ENCODE measurements at regions of chr3 and their contacts with region 1.

Region 1: DNA sequence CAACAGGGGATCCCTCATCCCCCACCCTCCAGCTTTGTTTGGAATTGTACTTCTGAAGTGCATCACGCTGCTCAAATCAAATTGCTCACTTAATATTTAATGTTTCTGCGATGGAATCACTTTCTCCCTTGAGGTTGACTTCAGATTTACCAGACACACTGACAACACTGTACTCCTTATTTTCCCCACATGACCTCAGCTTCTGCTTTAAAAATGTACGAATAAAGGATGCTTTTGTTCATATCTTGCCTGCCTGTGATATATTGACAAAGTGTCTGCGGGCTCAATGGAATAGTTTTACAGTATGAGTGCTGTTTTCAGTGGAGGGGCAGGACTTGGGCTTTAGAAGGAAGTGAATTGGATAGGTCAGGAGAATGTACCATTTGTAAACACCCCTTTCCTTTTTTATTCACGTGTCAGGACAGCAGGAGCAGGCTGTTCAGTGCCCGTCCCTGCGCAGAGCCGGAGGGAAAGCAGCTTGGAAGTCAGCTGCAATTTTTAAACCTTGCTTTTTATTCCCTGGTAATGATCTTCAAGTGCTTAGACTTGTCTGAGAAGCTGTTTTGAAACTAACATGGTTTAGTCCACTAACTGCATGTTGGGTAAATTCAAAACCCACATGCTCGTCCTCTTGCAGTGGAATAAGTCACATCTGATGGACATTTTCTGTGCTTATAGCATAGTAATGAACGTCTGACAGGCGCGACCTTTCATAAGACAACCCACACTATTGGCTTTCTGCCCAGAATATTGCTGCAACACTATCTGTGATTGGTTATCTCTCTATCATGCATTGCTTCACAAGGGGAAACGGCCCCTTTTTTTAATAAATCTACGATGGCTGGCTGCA is 29.9 kb downstream of the MBNL1 start:
- DNase-seq: peak in 31 of 35 experiments; percentile 10 to 89 (median 54)
- ATAC-seq: peak; percentile 73 to 78 (median 76)
- H3K4me3 ChIP-seq: peak overlapping the region in 1 of 2 donors; percentile 1
- H3K4me3 Mint-ChIP-seq: peak overlapping the region; percentile 59 to 78 (median 72)
- H3K27ac ChIP-seq: peak overlapping the region; percentile 54
- H3K27ac Mint-ChIP-seq: peak overlapping the region; percentile 90 to 92
- H3K4me1 ChIP-seq: peaks cover 51 to 67% of the 10 kb centered on the region in 2 experiments
- H3K4me1 Mint-ChIP-seq: peaks cover 79 to 89% (median 88%) of the 10 kb centered on the region in 3 donors
- H3K27me3 ChIP-seq: no peaks in the 10 kb centered on the region
- H3K27me3 Mint-ChIP-seq: no peaks in the 10 kb centered on the region

Region 2: DNA sequence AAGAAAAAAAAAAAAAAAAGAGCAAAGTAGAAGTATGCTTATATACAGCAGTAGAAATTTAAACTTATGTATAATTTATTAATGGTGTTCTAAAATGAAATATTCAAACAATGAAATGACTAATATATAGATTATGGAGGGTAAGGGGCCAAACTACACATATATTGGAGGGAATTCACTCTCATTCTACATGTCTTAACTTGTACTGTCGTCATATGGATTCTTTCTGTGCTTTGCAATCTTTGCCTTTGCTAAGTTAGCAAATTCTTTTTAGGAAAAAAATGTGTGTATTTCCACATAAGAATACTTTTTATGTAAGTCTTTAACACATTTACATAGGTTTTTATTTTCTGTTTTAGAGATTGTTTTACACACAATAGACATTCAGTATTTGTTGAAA is 148.8 kb before region 1 on chr3:
- CTCF ChIA-PET with region 1: no interaction called
- POLR2A ChIA-PET with region 1: interaction called in 1 of 2 experiments, 10 read pairs
- DNase-seq: no peak
- ATAC-seq: no peak
- H3K4me3 ChIP-seq: no peak overlapping the region
- H3K4me3 Mint-ChIP-seq: no peak overlapping the region
- H3K27ac ChIP-seq: no peak overlapping the region
- H3K27ac Mint-ChIP-seq: no peak overlapping the region
- H3K4me1 ChIP-seq: no peaks in the 10 kb centered on the region
- H3K4me1 Mint-ChIP-seq: peaks cover 2 to 20% (median 9%) of the 10 kb centered on the region in 3 donors
- H3K27me3 ChIP-seq: no peaks in the 10 kb centered on the region
- H3K27me3 Mint-ChIP-seq: peaks cover 0 to 2% of the 10 kb centered on the region in 2 donors

Region 3: GRCh38 chr3:152173627-152174026 is 125.0 kb before region 1 on chr3:
- CTCF ChIA-PET with region 1: interaction called in 1 of 2 experiments, 3 read pairs
- POLR2A ChIA-PET with region 1: interaction called in 1 of 2 experiments, 13 read pairs
- DNase-seq: no peak
- ATAC-seq: no peak
- H3K4me3 ChIP-seq: no peak overlapping the region
- H3K4me3 Mint-ChIP-seq: no peak overlapping the region
- H3K27ac ChIP-seq: no peak overlapping the region
- H3K27ac Mint-ChIP-seq: no peak overlapping the region
- H3K4me1 ChIP-seq: no peaks in the 10 kb centered on the region
- H3K4me1 Mint-ChIP-seq: peaks cover 8 to 11% (median 11%) of the 10 kb centered on the region in 3 donors
- H3K27me3 ChIP-seq: no peaks in the 10 kb centered on the region
- H3K27me3 Mint-ChIP-seq: no peaks in the 10 kb centered on the region

Region 4: GRCh38 chr3:152281133-152281713 is 17.4 kb before region 1 on chr3:
- CTCF ChIA-PET with region 1: interaction called, 4 to 5 read pairs
- POLR2A ChIA-PET with region 1: interaction called, 3 to 10 read pairs
- DNase-seq: no peak
- ATAC-seq: peak in 1 of 4 experiments; percentile 4
- H3K4me3 ChIP-seq: peak overlapping the region; percentile 13 to 38
- H3K4me3 Mint-ChIP-seq: peak overlapping the region; percentile 52 to 69 (median 64)
- H3K27ac ChIP-seq: peak overlapping the region; percentile 65
- H3K27ac Mint-ChIP-seq: peak overlapping the region; percentile 73 to 78
- H3K4me1 ChIP-seq: peaks cover 14 to 83% of the 10 kb centered on the region in 2 experiments
- H3K4me1 Mint-ChIP-seq: peaks cover 82 to 93% (median 84%) of the 10 kb centered on the region in 3 donors
- H3K27me3 ChIP-seq: no peaks in the 10 kb centered on the region
- H3K27me3 Mint-ChIP-seq: no peaks in the 10 kb centered on the region

Region 5: GRCh38 chr3:152322756-152323155 is 24.1 kb after region 1 on chr3:
- CTCF ChIA-PET with region 1: no interaction called
- POLR2A ChIA-PET with region 1: interaction called in 1 of 2 experiments, 12 read pairs
- DNase-seq: peak in 2 of 35 experiments; percentile 23 to 58
- ATAC-seq: peak in 2 of 4 experiments; percentile 31 to 54
- H3K4me3 ChIP-seq: no peak overlapping the region
- H3K4me3 Mint-ChIP-seq: peak overlapping the region; percentile 22 to 62 (median 39)
- H3K27ac ChIP-seq: peak overlapping the region; percentile 61
- H3K27ac Mint-ChIP-seq: peak overlapping the region; percentile 49 to 56
- H3K4me1 ChIP-seq: peaks cover 12 to 46% of the 10 kb centered on the region in 2 experiments
- H3K4me1 Mint-ChIP-seq: peaks cover 78 to 91% (median 83%) of the 10 kb centered on the region in 3 donors
- H3K27me3 ChIP-seq: no peaks in the 10 kb centered on the region
- H3K27me3 Mint-ChIP-seq: no peaks in the 10 kb centered on the region

Region 6: GRCh38 chr3:152328841-152329240 is 30.2 kb after region 1 on chr3:
- CTCF ChIA-PET with region 1: interaction called in 1 of 2 experiments, 10 read pairs
- POLR2A ChIA-PET with region 1: interaction called, 3 to 12 read pairs
- DNase-seq: no peak
- ATAC-seq: no peak
- H3K4me3 ChIP-seq: no peak overlapping the region
- H3K4me3 Mint-ChIP-seq: peak overlapping the region; percentile 1 to 28 (median 3)
- H3K27ac ChIP-seq: peak overlapping the region; percentile 15
- H3K27ac Mint-ChIP-seq: peak overlapping the region; percentile 83 to 87
- H3K4me1 ChIP-seq: peaks cover 25 to 26% of the 10 kb centered on the region in 2 experiments
- H3K4me1 Mint-ChIP-seq: peaks cover 82 to 90% (median 87%) of the 10 kb centered on the region in 3 donors
- H3K27me3 ChIP-seq: no peaks in the 10 kb centered on the region
- H3K27me3 Mint-ChIP-seq: no peaks in the 10 kb centered on the region

Region 7: GRCh38 chr3:152348436-152349177 is 50.0 kb after region 1 on chr3:
- CTCF ChIA-PET with region 1: no interaction called
- POLR2A ChIA-PET with region 1: no interaction called
- DNase-seq: no peak
- ATAC-seq: no peak
- H3K4me3 ChIP-seq: no peak overlapping the region
- H3K4me3 Mint-ChIP-seq: no peak overlapping the region
- H3K27ac ChIP-seq: peak overlapping the region; percentile 3
- H3K27ac Mint-ChIP-seq: no peak overlapping the region
- H3K4me1 ChIP-seq: peaks cover 0 to 3% of the 10 kb centered on the region in 2 experiments
- H3K4me1 Mint-ChIP-seq: peaks cover 38 to 52% (median 48%) of the 10 kb centered on the region in 3 donors
- H3K27me3 ChIP-seq: no peaks in the 10 kb centered on the region
- H3K27me3 Mint-ChIP-seq: no peaks in the 10 kb centered on the region

Region 8: DNA sequence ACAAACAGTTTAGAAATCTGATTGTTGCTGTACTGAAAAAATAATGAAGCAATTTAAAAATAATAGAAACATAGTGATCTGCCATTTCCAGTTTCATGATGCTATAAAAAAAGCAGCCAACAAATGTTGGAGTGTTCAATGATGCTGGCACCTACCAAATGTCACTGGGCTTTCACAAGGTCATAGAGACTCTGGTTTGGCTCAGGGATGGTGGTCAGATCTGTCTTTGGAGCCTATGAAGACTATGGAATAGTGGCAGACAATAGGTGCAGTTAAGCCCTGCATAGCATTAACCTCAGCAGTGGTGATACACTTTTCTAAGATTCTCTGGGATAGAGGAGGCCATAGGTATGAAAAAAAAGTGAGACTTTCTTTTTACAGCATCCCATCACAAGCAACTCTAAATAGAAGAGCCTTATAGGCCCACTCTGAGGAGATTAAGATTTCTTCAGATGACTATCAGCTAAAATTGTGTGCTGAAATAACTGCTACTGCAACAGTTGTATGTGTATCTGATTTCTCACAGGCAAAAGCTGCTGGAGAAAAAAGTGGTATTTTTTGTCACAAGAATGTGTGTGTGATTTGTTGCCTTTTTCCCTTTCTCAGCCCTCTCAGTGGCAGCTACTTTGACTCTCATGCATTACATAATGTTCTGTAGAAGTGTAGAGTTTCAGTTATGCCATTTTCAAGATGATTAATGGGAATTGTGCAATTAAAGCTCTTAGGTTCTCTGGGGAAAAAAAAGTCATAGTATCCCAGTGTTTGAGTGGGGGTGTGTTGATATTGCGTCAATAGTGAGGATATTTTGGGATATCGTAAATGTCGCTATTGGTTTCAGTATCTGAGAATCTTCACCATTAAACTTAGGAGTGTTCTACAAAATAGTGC is 107.5 kb after region 1 on chr3:
- CTCF ChIA-PET with region 1: no interaction called
- POLR2A ChIA-PET with region 1: interaction called, 5 to 14 read pairs
- DNase-seq: no peak
- ATAC-seq: no peak
- H3K4me3 ChIP-seq: no peak overlapping the region
- H3K4me3 Mint-ChIP-seq: peak overlapping the region in 1 of 3 donors; percentile 15
- H3K27ac ChIP-seq: peak overlapping the region; percentile 20
- H3K27ac Mint-ChIP-seq: peak overlapping the region; percentile 64 to 77
- H3K4me1 ChIP-seq: peaks cover 14 to 20% of the 10 kb centered on the region in 2 experiments
- H3K4me1 Mint-ChIP-seq: peaks cover 78 to 82% (median 81%) of the 10 kb centered on the region in 3 donors
- H3K27me3 ChIP-seq: no peaks in the 10 kb centered on the region
- H3K27me3 Mint-ChIP-seq: no peaks in the 10 kb centered on the region

Region 9: DNA sequence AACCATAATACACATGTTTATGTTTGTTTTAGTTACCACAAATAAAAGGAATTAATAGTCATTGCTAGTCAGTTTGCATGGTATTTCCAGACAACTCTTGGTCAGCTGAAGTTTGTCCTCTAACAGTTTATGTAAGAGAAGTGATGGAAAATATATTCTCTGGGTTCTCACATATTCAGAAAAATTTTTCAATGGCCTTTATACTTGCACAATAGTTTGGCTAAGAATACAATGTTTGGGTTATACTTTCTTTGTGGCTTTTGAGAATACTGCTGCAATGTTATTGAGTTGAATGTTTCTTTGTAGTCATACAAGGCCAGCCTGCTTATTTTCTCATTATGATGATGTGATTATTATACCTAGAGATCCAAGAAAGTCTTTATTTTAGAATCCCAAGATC is 997.3 kb after region 1 on chr3:
- CTCF ChIA-PET with region 1: no interaction called
- POLR2A ChIA-PET with region 1: no interaction called
- DNase-seq: no peak
- ATAC-seq: no peak
- H3K4me3 ChIP-seq: no peak overlapping the region
- H3K4me3 Mint-ChIP-seq: no peak overlapping the region
- H3K27ac ChIP-seq: no peak overlapping the region
- H3K27ac Mint-ChIP-seq: no peak overlapping the region
- H3K4me1 ChIP-seq: peaks cover 0 to 3% of the 10 kb centered on the region in 2 experiments
- H3K4me1 Mint-ChIP-seq: peaks cover 8 to 16% (median 10%) of the 10 kb centered on the region in 3 donors
- H3K27me3 ChIP-seq: no peaks in the 10 kb centered on the region
- H3K27me3 Mint-ChIP-seq: no peaks in the 10 kb centered on the region